ENCODE measurements at regions of chr21 and their contacts with region 1.

Region 1: DNA sequence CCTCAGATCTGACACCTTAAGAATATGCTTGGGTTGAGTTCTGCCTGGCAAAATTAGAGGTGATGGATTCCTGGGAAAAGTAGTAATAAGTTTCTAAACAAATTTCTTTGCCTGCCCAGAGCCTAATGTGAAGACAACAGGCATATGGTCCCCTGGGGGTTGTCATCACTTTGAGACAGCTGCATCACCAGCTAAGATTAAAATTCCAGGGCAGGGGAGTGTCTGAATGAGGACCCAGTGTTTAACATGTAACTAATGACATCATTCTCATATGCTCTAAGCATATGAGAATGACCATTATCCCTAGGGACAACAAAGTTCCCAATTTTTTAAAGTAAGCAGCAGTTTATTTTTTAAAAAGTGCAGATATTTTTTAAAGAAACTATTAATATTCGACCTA is 432.2 kb downstream of the PCP4 start:
- DNase-seq: no peak
- ATAC-seq: no peak
- H3K4me3 ChIP-seq: no peak overlapping the region
- H3K27ac ChIP-seq: no peak overlapping the region
- H3K4me1 ChIP-seq: no peaks in the 10 kb centered on the region
- H3K27me3 ChIP-seq: no peaks in the 10 kb centered on the region
- CTCF ChIP-seq: no peak
- POLR2A ChIP-seq: no peak

Region 2: DNA sequence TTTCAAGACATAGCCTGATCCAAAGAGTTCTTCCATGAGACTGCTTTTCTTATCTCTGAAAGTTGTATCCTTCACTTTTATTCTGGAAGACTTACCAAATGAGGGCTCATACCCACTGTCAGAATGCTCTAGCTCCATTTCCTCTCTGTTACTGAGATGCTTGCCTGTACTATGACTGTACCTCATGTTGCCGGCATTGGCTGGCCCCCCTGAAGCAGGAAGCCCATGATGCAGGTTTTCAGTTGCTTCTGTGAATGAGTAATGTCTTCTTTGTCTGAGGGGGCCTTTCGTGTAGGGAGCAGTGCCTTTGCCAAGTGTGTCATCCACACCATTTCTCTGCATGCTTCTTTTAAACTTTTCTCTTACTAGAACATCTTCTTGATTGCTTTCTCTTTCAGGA is 893.4 kb before region 1 on chr21:
- intact Hi-C with region 1: no loop called
- DNase-seq: no peak
- ATAC-seq: no peak
- H3K4me3 ChIP-seq: no peak overlapping the region
- H3K27ac ChIP-seq: no peak overlapping the region
- H3K4me1 ChIP-seq: no peaks in the 10 kb centered on the region
- H3K27me3 ChIP-seq: no peaks in the 10 kb centered on the region
- CTCF ChIP-seq: no peak
- POLR2A ChIP-seq: no peak

Region 3: DNA sequence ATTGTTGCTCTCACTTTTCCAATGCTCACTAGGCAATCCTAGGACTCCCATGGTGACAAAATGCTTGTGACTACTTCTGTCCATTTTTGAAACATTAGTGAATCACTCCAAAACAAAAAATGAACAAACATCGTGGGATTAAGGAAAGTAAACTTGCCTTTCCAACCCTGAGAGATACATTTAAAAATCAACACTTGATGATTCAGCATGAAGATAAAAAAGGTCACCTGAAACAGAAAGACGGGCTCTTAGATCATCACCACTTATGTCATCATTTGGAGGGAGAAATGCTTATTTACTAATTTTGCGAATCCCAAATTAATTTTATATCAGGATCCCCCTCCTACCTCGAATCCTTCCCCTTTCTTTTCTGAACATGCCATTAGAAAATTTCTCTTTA is 68.4 kb after region 1 on chr21:
- intact Hi-C with region 1: loop called in 1 of 10 experiments (anchors 10 kb)
- DNase-seq: no peak
- ATAC-seq: no peak
- H3K4me3 ChIP-seq: no peak overlapping the region
- H3K27ac ChIP-seq: no peak overlapping the region
- H3K4me1 ChIP-seq: no peaks in the 10 kb centered on the region
- H3K27me3 ChIP-seq: no peaks in the 10 kb centered on the region
- CTCF ChIP-seq: no peak
- POLR2A ChIP-seq: no peak

Region 4: GRCh38 chr21:40385892-40386599 is 86.6 kb after region 1 on chr21:
- intact Hi-C with region 1: no loop called
- DNase-seq: peak; percentile 23 to 73 (median 45)
- ATAC-seq: peak; percentile 37 to 83 (median 75)
- H3K4me3 ChIP-seq: no peak overlapping the region
- H3K27ac ChIP-seq: no peak overlapping the region
- H3K4me1 ChIP-seq: peaks cover 0 to 4% (median 0%) of the 10 kb centered on the region in 12 donors
- H3K27me3 ChIP-seq: peaks cover 0 to 12% (median 0%) of the 10 kb centered on the region in 9 donors
- CTCF ChIP-seq: peak; percentile 60 to 87 (median 80)
- POLR2A ChIP-seq: no peak

Measured in heart left ventricle (tissue), 16 donors.